CD4-positive, alpha-beta T cell (primary cell): ENCODE measurements at regions of chr7 and their contacts with region 1.

Region 1: GRCh38 chr7:44587843-44588711 is 6.0 kb upstream of the TMED4 start:
- DNase-seq: peak; percentile 30 to 81 (median 57)
- ATAC-seq: peak; percentile 76
- H3K4me3 ChIP-seq: no peak overlapping the region
- H3K4me3 Mint-ChIP-seq: no peak overlapping the region
- H3K27ac ChIP-seq: no peak overlapping the region
- H3K27ac Mint-ChIP-seq: no peak overlapping the region
- H3K4me1 ChIP-seq: peaks cover 2% of the 10 kb centered on the region
- H3K4me1 Mint-ChIP-seq: peaks cover 7% of the 10 kb centered on the region
- H3K27me3 ChIP-seq: no peaks in the 10 kb centered on the region
- H3K27me3 Mint-ChIP-seq: no peaks in the 10 kb centered on the region
- CTCF ChIP-seq: peak; percentile 88

Region 2: DNA sequence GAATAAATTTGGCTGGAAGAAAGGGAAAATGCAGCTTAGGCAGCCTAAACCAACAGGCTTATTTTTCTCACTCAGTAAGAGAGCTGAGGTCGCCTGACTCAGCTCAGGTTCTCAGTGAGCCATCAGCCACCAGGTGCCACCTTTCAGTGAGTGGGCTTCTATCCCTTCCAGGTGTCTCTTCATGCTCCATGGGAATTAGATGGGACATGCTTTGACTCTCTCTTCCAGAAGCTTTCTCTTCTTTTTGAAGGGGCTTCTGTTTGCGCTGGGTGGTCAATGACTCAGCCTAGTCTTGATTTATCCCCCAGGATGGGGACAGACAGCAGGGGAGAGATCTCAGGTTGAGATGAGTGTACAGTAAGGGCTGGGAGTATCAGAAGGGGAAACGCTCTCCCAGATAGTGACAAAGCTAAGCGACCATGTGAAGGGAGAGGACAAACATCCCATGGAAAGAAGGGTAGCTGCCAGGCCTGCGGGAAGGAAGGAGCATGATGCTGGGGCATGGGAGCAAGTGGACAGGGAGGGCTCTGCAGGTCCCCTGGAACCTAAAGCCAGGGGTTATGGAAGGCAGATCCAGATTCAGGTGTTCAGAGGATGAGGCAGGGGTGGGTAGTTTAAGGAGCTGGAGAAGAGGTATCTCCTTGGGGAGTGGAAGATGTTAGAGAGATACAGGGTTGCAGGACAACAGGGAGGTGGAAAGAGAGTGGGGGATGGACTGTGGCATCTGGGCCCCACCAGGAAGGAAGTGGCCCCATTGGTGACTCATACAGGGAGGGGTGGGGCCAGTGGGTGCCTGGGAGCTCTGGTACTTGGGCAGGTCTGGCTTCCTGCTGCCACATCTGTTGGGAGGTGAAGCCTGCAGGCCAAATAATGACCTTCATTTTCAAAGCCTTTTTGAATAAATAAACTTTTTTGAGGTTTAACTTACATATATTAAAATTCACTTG is 50.8 kb after region 1 on chr7:
- CTCF ChIA-PET with region 1: interaction called, 3 read pairs
- POLR2A ChIA-PET with region 1: interaction called, 13 read pairs
- intact Hi-C with region 1: loop called in 1 of 2 experiments (anchors 2 kb)
- DNase-seq: peak; percentile 58 to 93 (median 78)
- ATAC-seq: peak; percentile 55
- H3K4me3 ChIP-seq: peak overlapping the region; percentile 21
- H3K4me3 Mint-ChIP-seq: peak overlapping the region; percentile 89
- H3K27ac ChIP-seq: peak overlapping the region; percentile 90 to 95
- H3K27ac Mint-ChIP-seq: peak overlapping the region; percentile 96
- H3K4me1 ChIP-seq: peaks cover 86% of the 10 kb centered on the region
- H3K4me1 Mint-ChIP-seq: peaks cover 72% of the 10 kb centered on the region
- H3K27me3 ChIP-seq: no peaks in the 10 kb centered on the region
- H3K27me3 Mint-ChIP-seq: no peaks in the 10 kb centered on the region
- CTCF ChIP-seq: no peak

Region 3: DNA sequence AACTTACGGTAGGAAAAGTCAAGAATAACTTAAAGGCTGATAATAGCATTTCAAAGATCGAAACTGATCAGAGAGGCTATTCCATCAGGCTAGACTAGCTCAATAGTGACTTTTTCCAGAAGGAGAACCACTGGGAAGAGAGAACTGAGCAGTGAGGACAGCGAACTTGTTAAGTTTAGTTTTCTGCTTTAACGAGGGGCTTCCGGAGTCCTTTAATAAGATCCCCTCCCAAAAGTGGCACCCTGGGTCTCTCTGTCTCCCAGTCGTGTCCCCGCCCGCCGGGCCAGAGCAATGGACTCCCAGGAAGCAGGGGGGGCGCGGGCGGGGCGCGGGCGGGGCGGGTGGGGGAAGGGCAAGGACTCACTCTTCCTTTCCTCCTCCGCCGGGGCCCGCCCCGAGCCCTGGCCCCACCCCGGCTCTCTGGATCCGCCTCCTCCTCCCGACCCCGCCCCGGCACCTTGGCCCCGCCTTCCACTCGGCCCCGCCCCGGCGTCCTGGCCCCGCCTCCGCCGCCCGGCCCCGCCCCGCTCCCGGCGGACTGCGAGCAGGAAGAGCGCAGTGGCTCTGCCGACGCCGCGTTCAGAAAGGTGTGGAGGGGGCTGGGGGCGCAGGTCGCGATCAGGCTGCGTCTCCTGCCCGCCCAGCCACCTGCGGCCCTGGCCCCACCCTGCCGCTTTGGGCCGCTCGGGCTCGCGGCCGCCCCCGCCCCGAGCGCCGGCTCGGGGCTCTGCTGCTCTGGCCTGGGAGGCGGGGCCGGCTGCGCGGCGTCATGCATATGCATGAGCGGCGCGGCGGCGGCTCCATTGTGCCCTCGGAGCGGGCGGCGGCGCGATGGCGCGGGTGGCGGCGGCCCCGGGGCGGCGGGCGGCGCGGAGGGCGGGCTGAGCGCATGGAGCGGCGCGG is 160.2 kb after region 1 on chr7 and contains the start of gene ZMIZ2:
- CTCF ChIA-PET with region 1: interaction called, 4 read pairs
- POLR2A ChIA-PET with region 1: interaction called, 9 read pairs
- intact Hi-C with region 1: loop called (anchors 5 kb)
- DNase-seq: peak; percentile 85 to 97 (median 92)
- ATAC-seq: peak; percentile 85
- H3K4me3 ChIP-seq: peak within 1 kb of the TSS; percentile 87
- H3K4me3 Mint-ChIP-seq: peak within 1 kb of the TSS; percentile 84
- H3K27ac ChIP-seq: peak within 1 kb of the TSS; percentile 70 to 75
- H3K27ac Mint-ChIP-seq: peak within 1 kb of the TSS; percentile 86
- H3K4me1 ChIP-seq: peaks cover 37% of the 10 kb centered on the region
- H3K4me1 Mint-ChIP-seq: peaks cover 43% of the 10 kb centered on the region
- H3K27me3 ChIP-seq: no peaks in the 10 kb centered on the region
- H3K27me3 Mint-ChIP-seq: no peaks in the 10 kb centered on the region
- CTCF ChIP-seq: no peak
- total RNA-seq, gene ZMIZ2: 81.5 to 82.0 TPM

Region 4: GRCh38 chr7:44921607-44922359 is 333.7 kb after region 1 on chr7:
- CTCF ChIA-PET with region 1: interaction called, 5 read pairs
- POLR2A ChIA-PET with region 1: no interaction called
- intact Hi-C with region 1: loop called (anchors 1 kb)
- DNase-seq: peak; percentile 88 to 98 (median 94)
- ATAC-seq: peak; percentile 98
- H3K4me3 ChIP-seq: no peak overlapping the region
- H3K4me3 Mint-ChIP-seq: no peak overlapping the region
- H3K27ac ChIP-seq: no peak overlapping the region
- H3K27ac Mint-ChIP-seq: no peak overlapping the region
- H3K4me1 ChIP-seq: peaks cover 9% of the 10 kb centered on the region
- H3K4me1 Mint-ChIP-seq: peaks cover 4% of the 10 kb centered on the region
- H3K27me3 ChIP-seq: no peaks in the 10 kb centered on the region
- H3K27me3 Mint-ChIP-seq: peaks cover 1% of the 10 kb centered on the region
- CTCF ChIP-seq: peak; percentile 85